CD8-positive, alpha-beta T cell (primary cell): ENCODE measurements at regions of chr20 and their contacts with region 1.

Region 1: DNA sequence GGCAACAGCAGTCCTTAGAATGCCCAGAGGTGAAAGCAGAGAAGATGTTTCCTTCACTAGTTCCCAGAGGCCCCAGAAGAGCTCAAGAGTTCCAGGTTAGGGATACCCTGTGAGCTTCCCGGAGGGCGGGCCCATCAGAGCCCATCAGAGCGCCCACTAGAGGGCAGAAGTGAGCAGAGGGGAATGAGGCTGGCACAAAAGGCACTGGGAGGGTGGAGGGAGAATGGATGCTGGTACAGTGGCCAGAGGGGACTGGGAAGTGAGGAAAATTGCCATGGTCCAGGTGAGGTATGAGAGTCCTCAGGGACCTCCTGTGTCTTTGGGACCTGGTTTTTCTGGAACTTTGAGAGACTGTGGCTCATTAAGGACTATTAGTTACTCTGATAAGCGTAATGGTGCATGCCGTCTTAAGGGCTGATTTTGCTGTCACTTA is 57.3 kb downstream of the LINC00237 start:
- DNase-seq: peak; percentile 11 to 63 (median 52)
- ATAC-seq: peak; percentile 46
- H3K4me3 ChIP-seq: no peak overlapping the region
- H3K4me3 Mint-ChIP-seq: no peak overlapping the region
- H3K27ac ChIP-seq: no peak overlapping the region
- H3K27ac Mint-ChIP-seq: no peak overlapping the region
- H3K4me1 ChIP-seq: no peaks in the 10 kb centered on the region
- H3K4me1 Mint-ChIP-seq: no peaks in the 10 kb centered on the region
- H3K27me3 ChIP-seq: peaks cover 0 to 7% of the 10 kb centered on the region in 2 experiments
- H3K27me3 Mint-ChIP-seq: peaks cover 18% of the 10 kb centered on the region
- CTCF ChIP-seq: peak; percentile 65

Region 2: GRCh38 chr20:21137078-21137477 is 88.2 kb after region 1 on chr20:
- CTCF ChIA-PET with region 1: interaction called, 3 read pairs
- POLR2A ChIA-PET with region 1: no interaction called
- intact Hi-C with region 1: loop called in 1 of 2 experiments (anchors 5 kb)
- DNase-seq: no peak
- ATAC-seq: no peak
- H3K4me3 ChIP-seq: no peak overlapping the region
- H3K4me3 Mint-ChIP-seq: no peak overlapping the region
- H3K27ac ChIP-seq: no peak overlapping the region
- H3K27ac Mint-ChIP-seq: no peak overlapping the region
- H3K4me1 ChIP-seq: no peaks in the 10 kb centered on the region
- H3K4me1 Mint-ChIP-seq: peaks cover 11% of the 10 kb centered on the region
- H3K27me3 ChIP-seq: no peaks in the 10 kb centered on the region
- H3K27me3 Mint-ChIP-seq: no peaks in the 10 kb centered on the region
- CTCF ChIP-seq: no peak